ENCODE measurements at regions of chr7 and their contacts with region 1.

Region 1: DNA sequence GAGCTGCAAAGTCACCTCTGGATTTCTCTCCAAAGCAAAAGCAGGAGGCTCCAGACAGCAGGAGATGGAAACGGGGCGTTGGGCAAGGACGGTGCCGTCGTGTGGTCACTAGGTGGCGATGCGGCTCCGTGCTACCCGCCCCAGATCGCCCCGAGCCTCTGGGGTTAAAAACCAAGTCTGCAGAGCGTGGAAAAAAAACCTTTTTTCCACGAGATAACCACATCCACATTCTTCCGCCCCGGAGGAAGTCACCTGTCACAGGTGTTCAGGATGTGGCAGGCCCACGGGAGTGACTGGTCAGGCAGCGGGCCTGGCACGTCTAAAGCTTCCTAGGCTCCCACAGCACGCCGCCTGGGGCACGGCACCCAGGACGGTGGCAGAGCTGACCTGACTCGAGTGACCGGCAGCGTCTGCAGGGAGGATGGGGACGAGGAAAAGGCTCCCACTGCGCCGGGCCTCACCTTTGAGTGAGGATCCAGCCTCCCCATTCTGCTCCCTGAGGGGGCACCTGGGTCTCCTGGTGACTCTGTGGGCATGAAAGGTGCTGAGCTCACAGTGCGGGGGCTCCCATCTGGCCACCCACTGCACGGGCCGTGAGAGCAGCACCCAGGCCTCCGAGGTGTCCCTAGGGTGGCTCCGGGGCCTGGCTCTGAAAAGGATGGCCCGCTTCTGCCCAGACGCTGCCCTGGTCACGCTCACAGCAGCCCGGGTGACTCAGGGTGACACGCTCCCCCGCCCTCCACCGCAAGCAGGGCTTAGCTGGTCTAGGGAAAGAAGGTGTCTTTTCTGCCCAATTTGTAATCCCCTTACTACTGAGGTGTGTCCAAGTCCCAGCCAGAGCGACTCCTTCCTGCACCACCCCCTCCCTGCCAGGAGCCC is 71.3 kb upstream of the TNRC18 start:
- DNase-seq: peak; percentile 88
- ATAC-seq: peak; percentile 84

Region 2: GRCh38 chr7:5557920-5558401 is 63.0 kb after region 1 on chr7:
- intact Hi-C with region 1: loop called (anchors 2 kb)
- DNase-seq: peak; percentile 91
- ATAC-seq: peak; percentile 52

Region 3: GRCh38 chr7:5704534-5704922 is 209.6 kb after region 1 on chr7:
- intact Hi-C with region 1: loop called (anchors 5 kb)
- DNase-seq: peak; percentile 78
- ATAC-seq: peak; percentile 81

Measured in Right ventricle myocardium superior (tissue), 1 donor.